CD14-positive monocyte (primary cell): ENCODE measurements at regions of chr16 and their contacts with region 1.

Region 1: GRCh38 chr16:30065143-30065850 is at the start of gene ALDOA:
- DNase-seq: peak; percentile 95 to 100 (median 99)
- H3K4me3 ChIP-seq: peak within 1 kb of the TSS; percentile 95 to 99 (median 97)
- H3K4me3 Mint-ChIP-seq: peak within 1 kb of the TSS; percentile 93 to 97
- H3K27ac ChIP-seq: peak within 1 kb of the TSS; percentile 94
- H3K27ac Mint-ChIP-seq: peak within 1 kb of the TSS; percentile 94 to 97 (median 97)
- H3K4me1 ChIP-seq: peaks cover 42 to 55% of the 10 kb centered on the region in 2 donors
- H3K4me1 Mint-ChIP-seq: peaks cover 38% of the 10 kb centered on the region
- H3K27me3 ChIP-seq: no peaks in the 10 kb centered on the region
- H3K27me3 Mint-ChIP-seq: peaks cover 0 to 3% (median 0%) of the 10 kb centered on the region in 3 donors
- CTCF ChIP-seq: no peak
- polyA plus RNA-seq, gene ALDOA: 1,202 to 1,628 (median 1,429) TPM

Region 2: GRCh38 chr16:29805378-29806098 is 259.8 kb before region 1 on chr16:
- intact Hi-C with region 1: no loop called
- DNase-seq: peak; percentile 96 to 98 (median 97)
- H3K4me3 ChIP-seq: peak overlapping the region; percentile 55 to 88 (median 79)
- H3K4me3 Mint-ChIP-seq: peak overlapping the region; percentile 99
- H3K27ac ChIP-seq: peak overlapping the region; percentile 69 to 86
- H3K27ac Mint-ChIP-seq: peak overlapping the region; percentile 95 to 99 (median 97)
- H3K4me1 ChIP-seq: peaks cover 45 to 53% of the 10 kb centered on the region in 2 donors
- H3K4me1 Mint-ChIP-seq: peaks cover 39% of the 10 kb centered on the region
- H3K27me3 ChIP-seq: no peaks in the 10 kb centered on the region
- H3K27me3 Mint-ChIP-seq: peaks cover 0 to 4% (median 2%) of the 10 kb centered on the region in 3 donors
- CTCF ChIP-seq: no peak

Region 3: GRCh38 chr16:30028438-30029076 is 36.7 kb before region 1 on chr16:
- intact Hi-C with region 1: no loop called
- DNase-seq: no peak
- H3K4me3 ChIP-seq: no peak overlapping the region
- H3K4me3 Mint-ChIP-seq: peak overlapping the region in 1 of 2 donors; percentile 77
- H3K27ac ChIP-seq: no peak overlapping the region
- H3K27ac Mint-ChIP-seq: peak overlapping the region in 1 of 7 donors; percentile 50
- H3K4me1 ChIP-seq: peaks cover 0 to 4% of the 10 kb centered on the region in 2 donors
- H3K4me1 Mint-ChIP-seq: peaks cover 1% of the 10 kb centered on the region
- H3K27me3 ChIP-seq: peaks cover 30 to 59% of the 10 kb centered on the region in 2 donors
- H3K27me3 Mint-ChIP-seq: peaks cover 52 to 72% (median 66%) of the 10 kb centered on the region in 3 donors
- CTCF ChIP-seq: no peak

Region 4: GRCh38 chr16:30075507-30076275 is 10.4 kb after region 1 on chr16 and contains the start of gene PPP4C:
- intact Hi-C with region 1: loop called in 1 of 2 experiments (anchors 1 kb)
- DNase-seq: peak; percentile 86 to 92 (median 87)
- H3K4me3 ChIP-seq: peak within 1 kb of the TSS; percentile 69 to 93 (median 83)
- H3K4me3 Mint-ChIP-seq: peak within 1 kb of the TSS; percentile 90
- H3K27ac ChIP-seq: peak within 1 kb of the TSS; percentile 83 to 92
- H3K27ac Mint-ChIP-seq: peak within 1 kb of the TSS; percentile 91 to 96 (median 96)
- H3K4me1 ChIP-seq: peaks cover 24 to 39% of the 10 kb centered on the region in 2 donors
- H3K4me1 Mint-ChIP-seq: peaks cover 31% of the 10 kb centered on the region
- H3K27me3 ChIP-seq: no peaks in the 10 kb centered on the region
- H3K27me3 Mint-ChIP-seq: no peaks in the 10 kb centered on the region
- CTCF ChIP-seq: no peak
- polyA plus RNA-seq, gene PPP4C: 186 to 388 (median 279) TPM

Region 5: GRCh38 chr16:30122604-30123160 is 57.4 kb after region 1 on chr16:
- intact Hi-C with region 1: loop called (anchors 5 kb)
- DNase-seq: no peak
- H3K4me3 ChIP-seq: peak overlapping the region; percentile 76 to 91 (median 80)
- H3K4me3 Mint-ChIP-seq: peak overlapping the region; percentile 91 to 96
- H3K27ac ChIP-seq: peak overlapping the region; percentile 38 to 66
- H3K27ac Mint-ChIP-seq: peak overlapping the region; percentile 28 to 93 (median 79)
- H3K4me1 ChIP-seq: peaks cover 28 to 29% of the 10 kb centered on the region in 2 donors
- H3K4me1 Mint-ChIP-seq: peaks cover 24% of the 10 kb centered on the region
- H3K27me3 ChIP-seq: no peaks in the 10 kb centered on the region
- H3K27me3 Mint-ChIP-seq: peaks cover 0 to 4% (median 0%) of the 10 kb centered on the region in 3 donors
- CTCF ChIP-seq: no peak